Activated CD4-positive, alpha-beta memory T cell treated with anti-CD3 and anti-CD28 coated beads, Interleukin-2, amount 10 ng/mL, durations not matched to agents 7 days and 5 days (primary cell): ENCODE measurements at regions of chr2 and their contacts with region 1.

Region 1: DNA sequence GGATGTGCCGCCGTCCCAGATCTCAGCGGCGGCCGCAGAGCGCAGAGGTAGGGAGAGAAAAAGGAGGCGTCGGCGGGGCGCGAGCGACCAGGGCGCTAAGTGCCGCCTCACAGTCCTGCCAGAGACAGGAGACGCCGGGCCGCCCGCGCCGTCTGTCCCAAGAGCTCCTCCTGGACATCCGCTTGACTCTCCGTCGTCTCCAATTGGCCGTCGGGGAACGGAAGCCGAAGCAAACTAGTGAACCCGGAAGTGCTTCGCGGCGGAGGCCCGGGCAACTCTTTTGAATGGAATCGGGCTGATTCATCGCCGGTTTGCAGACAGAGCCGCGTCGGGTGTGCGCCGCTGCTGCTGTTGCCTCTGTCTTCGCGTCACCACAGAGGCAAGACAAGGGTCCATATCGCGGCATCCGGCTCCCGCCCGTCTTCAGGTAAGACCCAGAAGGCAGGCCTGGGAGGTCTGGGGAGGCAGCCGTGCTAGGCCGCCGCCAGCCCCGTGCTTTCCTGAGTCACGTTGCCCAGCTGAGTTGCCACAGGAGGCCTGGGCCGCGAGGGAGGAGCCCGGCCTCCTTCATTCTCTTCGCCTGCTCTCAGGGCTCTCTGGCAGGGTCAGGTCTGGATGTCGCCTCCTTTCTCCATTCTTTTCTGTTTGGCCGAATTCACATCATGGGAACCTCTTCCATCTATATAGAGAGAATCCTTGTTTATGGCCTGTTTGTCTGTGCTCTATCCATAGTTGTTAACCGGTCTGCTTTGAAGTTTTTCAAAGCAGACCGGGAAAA is at the start of gene PSMD14:
- DNase-seq: peak; percentile 94
- H3K4me3 Mint-ChIP-seq: peak within 1 kb of the TSS; percentile 84
- H3K27ac Mint-ChIP-seq: peak within 1 kb of the TSS; percentile 84
- H3K4me1 Mint-ChIP-seq: peaks cover 42% of the 10 kb centered on the region
- H3K27me3 Mint-ChIP-seq: peaks cover 6% of the 10 kb centered on the region
- total RNA-seq, gene PSMD14: 70.9 to 72.9 TPM

Region 2: GRCh38 chr2:161238560-161239325 is 69.6 kb before region 1 on chr2:
- CTCF ChIA-PET with region 1: interaction called, 3 read pairs
- POLR2A ChIA-PET with region 1: interaction called, 24 read pairs
- DNase-seq: peak; percentile 62
- H3K4me3 Mint-ChIP-seq: peak overlapping the region; percentile 79
- H3K27ac Mint-ChIP-seq: peak overlapping the region; percentile 15
- H3K4me1 Mint-ChIP-seq: peaks cover 45% of the 10 kb centered on the region
- H3K27me3 Mint-ChIP-seq: no peaks in the 10 kb centered on the region

Region 3: GRCh38 chr2:161321944-161322648 is 13.7 kb after region 1 on chr2:
- CTCF ChIA-PET with region 1: interaction called, 3 read pairs
- POLR2A ChIA-PET with region 1: interaction called, 16 read pairs
- DNase-seq: no peak
- H3K4me3 Mint-ChIP-seq: no peak overlapping the region
- H3K27ac Mint-ChIP-seq: no peak overlapping the region
- H3K4me1 Mint-ChIP-seq: peaks cover 6% of the 10 kb centered on the region
- H3K27me3 Mint-ChIP-seq: no peaks in the 10 kb centered on the region